HepG2 (cell line): ENCODE measurements at regions of chr6 and their contacts with region 1.

Region 1: GRCh38 chr6:42166444-42167141 is 6.6 kb upstream of the GUCA1A start:
- DNase-seq: peak; percentile 80
- ATAC-seq: peak; percentile 89
- H3K4me3 ChIP-seq: peak overlapping the region in 1 of 3 experiments; percentile 26; a peak in 1 of 6 replicates
- H3K27ac ChIP-seq: no peak overlapping the region
- H3K4me1 ChIP-seq: peaks cover 36% of the 10 kb centered on the region
- H3K27me3 ChIP-seq: peaks cover 0 to 2% of the 10 kb centered on the region in 2 experiments; a peak in 3 of 5 replicates
- CTCF ChIP-seq: peak; percentile 93
- EP300 ChIP-seq: no peak
- POLR2A ChIP-seq: no peak
- RAD21 ChIP-seq: peak; percentile 96

Region 2: GRCh38 chr6:42075159-42075838 is 91.3 kb before region 1 on chr6:
- CTCF ChIA-PET with region 1: interaction called, 107 read pairs
- POLR2A ChIA-PET with region 1: no interaction called
- in situ Hi-C with region 1: loop called (anchors 5 kb)
- intact Hi-C with region 1: loop called (anchors 1 kb)
- DNase-seq: peak; percentile 69
- ATAC-seq: peak; percentile 74
- H3K4me3 ChIP-seq: no peak overlapping the region
- H3K27ac ChIP-seq: no peak overlapping the region
- H3K4me1 ChIP-seq: no peaks in the 10 kb centered on the region
- H3K27me3 ChIP-seq: no peaks in the 10 kb centered on the region
- CTCF ChIP-seq: peak; percentile 93
- EP300 ChIP-seq: no peak
- POLR2A ChIP-seq: no peak
- RAD21 ChIP-seq: peak; percentile 89

Region 3: GRCh38 chr6:42095785-42096541 is 70.6 kb before region 1 on chr6:
- CTCF ChIA-PET with region 1: interaction called, 6 read pairs
- POLR2A ChIA-PET with region 1: interaction called, 3 read pairs
- in situ Hi-C with region 1: no loop called
- intact Hi-C with region 1: loop called (anchors 1 kb)
- DNase-seq: peak; percentile 74
- ATAC-seq: peak; percentile 67
- H3K4me3 ChIP-seq: no peak overlapping the region; a peak in 1 of 6 replicates
- H3K27ac ChIP-seq: no peak overlapping the region
- H3K4me1 ChIP-seq: peaks cover 65% of the 10 kb centered on the region
- H3K27me3 ChIP-seq: peaks cover 0 to 6% of the 10 kb centered on the region in 2 experiments; a peak in 1 of 5 replicates
- CTCF ChIP-seq: peak; percentile 75
- EP300 ChIP-seq: no peak
- POLR2A ChIP-seq: no peak
- RAD21 ChIP-seq: peak; percentile 36; the same call in 1 of the 2 replicates

Region 4: DNA sequence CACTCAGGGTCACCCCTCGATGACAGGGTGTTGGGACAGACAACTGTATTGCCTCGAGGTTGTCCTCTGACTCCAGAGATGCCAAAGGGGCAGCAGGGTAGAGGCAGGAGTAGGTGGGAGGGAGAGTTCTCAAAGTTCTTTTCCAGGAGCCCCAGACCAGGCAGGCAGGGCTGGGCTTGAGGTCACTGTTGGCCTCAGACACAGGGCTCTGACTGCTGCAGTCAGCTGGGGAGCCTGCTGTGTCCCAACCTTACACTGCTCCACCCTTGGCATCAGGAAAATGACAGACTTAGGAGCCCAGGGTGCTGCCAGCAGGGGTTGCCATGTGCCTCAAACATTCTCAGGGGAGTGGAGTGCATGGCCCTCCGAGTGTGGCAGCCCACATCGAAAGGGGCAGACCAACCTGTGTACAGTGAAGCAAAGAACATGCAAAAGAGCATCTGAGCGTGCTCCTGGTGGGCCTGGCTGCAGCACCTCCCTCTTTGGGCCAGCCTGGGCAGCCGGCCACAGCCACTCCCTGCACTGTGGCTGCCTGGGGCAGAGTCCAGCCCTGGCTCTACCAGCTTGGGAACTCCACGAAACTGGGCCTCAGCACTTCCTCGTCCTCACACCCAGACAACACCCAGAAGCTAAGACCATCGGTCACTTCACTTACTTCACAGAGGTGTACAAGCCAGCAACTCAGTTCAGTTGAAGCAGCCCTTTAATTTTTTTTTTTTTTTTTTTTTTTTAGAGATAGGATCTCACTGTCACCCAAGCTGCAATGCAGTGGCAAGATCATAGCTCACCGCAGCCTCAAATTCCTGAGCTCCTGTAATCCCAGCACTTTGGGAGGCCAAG is 48.2 kb before region 1 on chr6:
- CTCF ChIA-PET with region 1: interaction called, 3 read pairs
- POLR2A ChIA-PET with region 1: interaction called, 3 read pairs
- in situ Hi-C with region 1: no loop called
- intact Hi-C with region 1: loop called (anchors 5 kb)
- DNase-seq: peak; percentile 83
- ATAC-seq: peak; percentile 91
- H3K4me3 ChIP-seq: peak overlapping the region in 1 of 3 experiments; percentile 42; a peak in 2 of 6 replicates
- H3K27ac ChIP-seq: peak overlapping the region; percentile 57
- H3K4me1 ChIP-seq: peaks cover 46% of the 10 kb centered on the region
- H3K27me3 ChIP-seq: no peaks in the 10 kb centered on the region
- CTCF ChIP-seq: 0 out of 2 replicates have a peak, but pooled peaks have one; percentile 32
- EP300 ChIP-seq: peak in 1 of 2 experiments; percentile 37; a peak in 1 of 4 replicates
- POLR2A ChIP-seq: no peak
- RAD21 ChIP-seq: 0 out of 2 replicates have a peak, but pooled peaks have one; percentile 20

Region 5: DNA sequence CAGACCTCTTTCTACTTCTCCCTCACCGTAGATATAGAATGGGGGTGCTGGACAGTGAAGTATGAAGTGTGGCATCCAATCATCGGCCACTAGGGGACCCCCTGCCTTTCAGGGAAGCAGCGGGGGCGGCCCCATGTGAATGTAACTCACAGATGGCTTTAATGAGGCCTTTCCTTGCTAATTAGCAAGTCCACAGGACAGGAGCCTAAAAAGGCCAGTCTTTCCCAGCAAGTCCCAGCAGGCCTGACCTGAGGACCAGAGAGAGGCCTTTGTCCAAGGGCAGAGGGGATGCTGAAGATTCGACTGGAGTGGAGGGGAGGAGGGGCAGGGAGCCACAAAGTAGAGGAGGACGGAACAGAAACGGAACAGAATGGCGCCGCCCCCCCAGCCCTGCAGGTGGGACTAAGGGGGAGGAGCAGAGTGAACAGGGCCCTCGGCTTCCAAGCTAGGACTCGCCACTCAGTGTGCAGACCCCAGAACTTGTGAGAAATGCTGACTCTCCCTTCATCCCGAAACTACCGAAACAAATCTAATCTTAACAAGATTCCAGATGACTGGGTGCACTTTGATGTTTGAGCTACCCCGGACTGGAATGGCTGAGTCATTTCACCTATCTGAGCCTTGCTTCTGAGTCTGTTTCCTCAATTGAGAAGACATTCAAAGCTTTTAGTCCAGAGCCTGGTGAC is 29.9 kb before region 1 on chr6:
- CTCF ChIA-PET with region 1: interaction called, 13 read pairs
- POLR2A ChIA-PET with region 1: interaction called, 4 read pairs
- in situ Hi-C with region 1: no loop called
- intact Hi-C with region 1: loop called (anchors 1 kb)
- DNase-seq: peak; percentile 61
- ATAC-seq: peak; percentile 59
- H3K4me3 ChIP-seq: peak overlapping the region; percentile 24 to 64 (median 52)
- H3K27ac ChIP-seq: peak overlapping the region; percentile 60
- H3K4me1 ChIP-seq: peaks cover 75% of the 10 kb centered on the region
- H3K27me3 ChIP-seq: no peaks in the 10 kb centered on the region; a peak in 1 of 5 replicates
- CTCF ChIP-seq: peak; percentile 68
- EP300 ChIP-seq: peak in 1 of 2 experiments; percentile 58; a peak in 1 of 4 replicates
- POLR2A ChIP-seq: no peak
- RAD21 ChIP-seq: no peak

Region 6: DNA sequence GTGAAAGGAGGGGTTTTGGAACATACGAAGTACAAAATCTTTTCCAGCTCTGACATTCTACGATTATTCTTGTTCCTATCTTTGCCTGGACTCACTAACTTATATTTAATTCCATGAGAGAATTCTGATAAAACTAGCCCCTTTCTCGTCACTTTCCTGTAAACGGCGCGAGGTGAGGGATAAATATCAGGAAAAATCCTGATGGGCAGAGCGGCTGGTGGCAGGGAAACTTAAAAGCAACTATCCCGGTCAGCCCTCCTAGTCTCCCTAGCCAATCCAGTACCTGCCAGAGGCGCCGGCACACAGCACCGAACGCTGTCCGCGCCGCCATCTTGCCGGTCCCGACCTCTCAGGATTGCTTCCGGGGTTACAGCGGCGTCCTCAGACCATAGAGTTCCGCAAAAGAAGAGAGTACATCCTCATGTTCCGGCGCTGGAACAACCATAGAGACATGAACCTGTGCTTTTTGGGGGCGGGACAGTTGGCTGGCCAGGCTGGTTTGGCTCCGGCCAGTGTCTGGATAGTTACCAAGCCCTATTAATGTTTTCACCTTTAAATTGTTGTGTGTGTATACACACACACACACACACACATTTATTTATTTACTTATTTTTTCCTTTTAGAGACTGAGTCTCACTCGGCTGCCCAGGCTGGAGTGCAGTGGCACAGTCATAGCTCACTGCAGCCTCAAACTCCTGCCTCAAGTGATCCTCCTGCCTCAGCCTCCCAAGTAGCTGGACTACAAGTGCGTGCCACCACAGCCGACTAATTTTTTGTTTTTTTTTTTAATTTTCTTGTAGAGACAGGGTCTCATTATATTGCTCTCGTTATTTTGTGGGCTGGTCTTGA is 51.1 kb after region 1 on chr6 and contains the start of gene MRPS10:
- CTCF ChIA-PET with region 1: interaction called, 75 read pairs
- POLR2A ChIA-PET with region 1: interaction called, 6 read pairs
- in situ Hi-C with region 1: no loop called
- intact Hi-C with region 1: loop called (anchors 1 kb)
- DNase-seq: peak; percentile 97
- ATAC-seq: peak; percentile 98
- H3K4me3 ChIP-seq: peak within 1 kb of the TSS; percentile 69 to 100 (median 84)
- H3K27ac ChIP-seq: peak within 1 kb of the TSS; percentile 83
- H3K4me1 ChIP-seq: peaks cover 49% of the 10 kb centered on the region
- H3K27me3 ChIP-seq: no peaks in the 10 kb centered on the region; a peak in 1 of 5 replicates
- CTCF ChIP-seq: peak; percentile 37; the same call in 1 of the 2 replicates
- EP300 ChIP-seq: peak in 1 of 2 experiments; percentile 33; a peak in 1 of 4 replicates
- POLR2A ChIP-seq: peak; percentile 89 to 96
- RAD21 ChIP-seq: 0 out of 2 replicates have a peak, but pooled peaks have one; percentile 18
- total RNA-seq, gene MRPS10: 54.6 and 79.2 TPM in 2 replicates

Region 7: DNA sequence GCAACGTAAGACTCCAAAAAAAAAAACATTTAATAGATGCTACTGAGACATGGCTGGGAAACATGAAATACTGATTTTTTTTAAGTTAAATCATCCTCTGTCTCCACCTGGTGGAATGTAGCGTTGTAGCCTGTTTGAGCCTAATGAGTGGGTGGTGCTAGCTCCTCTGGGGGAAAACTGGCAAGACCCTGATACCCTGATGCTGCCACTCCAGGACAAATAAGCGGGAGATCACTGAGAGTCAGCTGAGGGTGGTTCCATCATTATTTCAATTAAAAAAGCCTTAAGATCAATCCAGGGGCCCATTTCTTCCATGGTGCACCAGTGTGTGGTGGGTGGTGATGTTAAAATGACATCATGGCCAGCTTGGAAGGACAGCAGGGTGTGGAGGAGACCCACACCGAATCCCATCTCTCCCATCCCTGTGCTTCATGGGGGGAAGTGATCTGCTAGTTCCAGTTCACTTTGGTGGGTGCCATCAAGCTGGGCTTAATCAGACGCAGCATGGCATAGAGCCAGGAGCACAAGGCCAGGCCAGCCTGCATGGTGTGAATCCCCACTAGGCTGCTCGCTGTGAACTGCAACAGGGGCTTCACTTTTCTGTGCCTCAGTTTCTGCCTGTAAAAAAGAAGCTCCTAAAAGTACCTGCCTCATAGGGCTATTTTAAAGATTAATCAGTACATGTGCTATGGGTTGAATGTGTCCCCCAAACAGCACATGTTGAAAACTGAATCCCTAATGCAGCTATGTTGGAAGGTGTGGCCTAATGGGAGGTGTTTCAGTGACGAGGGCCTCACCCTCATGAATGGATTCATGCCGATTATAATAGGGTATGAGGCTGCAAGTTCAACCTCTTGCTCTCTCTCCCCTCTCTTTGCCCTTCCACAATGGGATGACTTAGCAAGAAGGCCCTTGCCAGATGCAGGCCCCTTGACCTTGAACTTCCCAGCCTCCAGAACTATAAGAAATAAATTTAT is 64.0 kb after region 1 on chr6:
- CTCF ChIA-PET with region 1: interaction called, 16 read pairs
- POLR2A ChIA-PET with region 1: no interaction called
- in situ Hi-C with region 1: loop called (anchors 5 kb)
- intact Hi-C with region 1: loop called (anchors 1 kb)
- DNase-seq: no peak
- ATAC-seq: peak; percentile 61
- H3K4me3 ChIP-seq: no peak overlapping the region
- H3K27ac ChIP-seq: no peak overlapping the region
- H3K4me1 ChIP-seq: peaks cover 29% of the 10 kb centered on the region
- H3K27me3 ChIP-seq: no peaks in the 10 kb centered on the region
- CTCF ChIP-seq: peak; percentile 65
- EP300 ChIP-seq: no peak
- POLR2A ChIP-seq: no peak
- RAD21 ChIP-seq: peak; percentile 31; the same call in 1 of the 2 replicates